ENCODE measurements at regions of chr9 and their contacts with region 1.

Region 1: DNA sequence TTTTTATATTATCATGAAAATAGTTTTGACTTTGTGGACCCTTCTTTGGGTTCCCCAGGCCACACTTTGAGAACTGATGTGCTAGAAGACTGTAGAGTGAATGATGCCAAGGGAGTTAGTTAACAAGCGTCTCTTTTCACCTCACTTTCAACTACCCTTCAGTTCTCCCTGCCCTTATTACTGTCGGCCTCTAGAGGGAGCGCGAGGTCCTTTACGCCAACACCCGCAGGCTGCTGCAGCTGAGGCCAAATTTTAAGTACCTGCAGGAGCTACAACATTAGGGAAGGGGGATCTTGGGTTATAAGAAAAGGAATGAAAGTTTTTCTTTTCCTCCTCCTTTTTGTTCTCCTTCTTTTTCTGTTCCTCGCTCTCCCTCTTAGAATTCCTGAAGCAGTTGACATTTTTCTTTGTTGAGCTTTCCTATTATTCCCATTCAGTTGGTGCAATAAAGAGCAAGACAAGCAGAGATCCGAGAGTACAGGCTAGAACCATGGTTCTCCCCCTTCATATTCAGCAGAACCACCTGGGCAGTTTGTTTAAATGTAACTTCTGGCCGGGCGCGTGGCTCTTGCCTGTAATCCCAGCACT is 84.0 kb downstream of the ZFAND5 start:
- DNase-seq: peak; percentile 70 to 77 (median 73)
- ATAC-seq: peak; percentile 96 to 98 (median 97)
- H3K4me3 ChIP-seq: no peak overlapping the region
- H3K27ac ChIP-seq: no peak overlapping the region
- H3K4me1 ChIP-seq: no peaks in the 10 kb centered on the region
- H3K27me3 ChIP-seq: no peaks in the 10 kb centered on the region
- CTCF ChIP-seq: peak; percentile 88 to 94 (median 91)
- POLR2A ChIP-seq: no peak

Region 2: GRCh38 chr9:72333709-72334108 is 52.7 kb after region 1 on chr9:
- intact Hi-C with region 1: no loop called
- DNase-seq: no peak
- ATAC-seq: no peak
- H3K4me3 ChIP-seq: no peak overlapping the region
- H3K27ac ChIP-seq: no peak overlapping the region
- H3K4me1 ChIP-seq: no peaks in the 10 kb centered on the region
- H3K27me3 ChIP-seq: no peaks in the 10 kb centered on the region
- CTCF ChIP-seq: peak in 1 of 4 donors; percentile 9
- POLR2A ChIP-seq: no peak

Region 3: GRCh38 chr9:72812559-72813111 is 531.6 kb after region 1 on chr9:
- intact Hi-C with region 1: loop called in 1 of 2 experiments (anchors 10 kb)
- DNase-seq: no peak
- ATAC-seq: no peak
- H3K4me3 ChIP-seq: no peak overlapping the region
- H3K27ac ChIP-seq: no peak overlapping the region
- H3K4me1 ChIP-seq: no peaks in the 10 kb centered on the region
- H3K27me3 ChIP-seq: no peaks in the 10 kb centered on the region
- CTCF ChIP-seq: no peak
- POLR2A ChIP-seq: no peak

Region 4: DNA sequence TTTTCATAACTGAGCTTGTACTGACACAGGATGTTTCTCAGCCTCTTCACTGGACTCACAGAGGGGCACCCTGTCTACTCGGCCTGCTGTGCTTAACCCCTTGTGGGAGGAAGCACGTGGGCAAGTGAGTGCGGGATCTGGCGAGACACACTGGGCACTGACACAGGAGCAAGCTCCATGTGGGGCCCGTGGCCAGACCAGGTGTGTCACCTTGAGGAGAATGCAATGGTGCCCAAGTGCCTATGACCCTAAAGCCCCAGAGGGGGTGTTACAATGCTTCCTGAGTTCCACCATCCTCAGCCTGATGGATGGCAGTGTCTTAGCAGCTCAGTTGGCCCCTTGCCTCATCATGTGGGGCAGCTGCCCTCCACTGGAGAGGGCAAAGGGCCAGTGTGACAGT is 543.0 kb after region 1 on chr9:
- intact Hi-C with region 1: loop called (anchors 5 to 10 kb)
- DNase-seq: no peak
- ATAC-seq: no peak
- H3K4me3 ChIP-seq: no peak overlapping the region
- H3K27ac ChIP-seq: no peak overlapping the region
- H3K4me1 ChIP-seq: no peaks in the 10 kb centered on the region
- H3K27me3 ChIP-seq: no peaks in the 10 kb centered on the region
- CTCF ChIP-seq: no peak
- POLR2A ChIP-seq: no peak

Measured in right lobe of liver (tissue), 6 donors.